ENCODE measurements at regions of chr10 and their contacts with region 1.

Region 1: DNA sequence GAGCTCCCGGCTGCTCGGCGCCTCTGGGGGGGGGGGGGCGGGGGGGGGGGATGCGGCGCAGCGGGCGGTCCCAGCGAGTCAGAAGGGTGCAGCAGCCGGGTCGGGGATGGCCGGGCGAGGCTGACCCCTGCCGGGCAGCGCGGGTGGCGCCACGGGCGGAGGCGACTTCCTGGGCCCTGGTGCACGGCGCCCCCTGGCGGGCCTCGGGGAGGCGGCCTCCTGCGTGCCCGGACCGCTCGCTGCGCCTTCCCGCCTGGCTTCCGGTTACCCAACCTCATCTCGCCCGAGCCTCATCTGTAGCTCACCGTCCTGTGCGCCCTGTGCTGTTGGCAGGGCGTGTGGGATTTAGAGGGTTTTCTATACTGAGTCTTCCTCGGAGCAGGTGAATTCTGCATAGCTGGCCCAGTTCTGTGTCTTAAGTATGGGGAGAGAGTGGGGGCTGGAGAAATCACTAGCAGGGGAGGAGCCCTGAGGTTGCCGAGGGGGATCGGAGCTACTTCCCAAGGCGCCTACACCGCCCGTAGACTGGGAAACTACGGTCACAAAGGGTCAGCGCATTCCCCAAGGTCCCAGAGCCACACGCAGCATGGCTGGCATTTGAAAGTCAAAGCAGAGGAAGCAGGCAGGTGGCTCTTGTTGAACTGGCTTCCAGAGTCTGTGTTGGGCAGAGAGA is 28.3 kb upstream of the WDFY4 start:
- DNase-seq: peak; percentile 93
- H3K4me3 Mint-ChIP-seq: peak overlapping the region; percentile 64
- H3K27ac Mint-ChIP-seq: no peak overlapping the region
- H3K4me1 Mint-ChIP-seq: peaks cover 5% of the 10 kb centered on the region
- H3K27me3 Mint-ChIP-seq: peaks cover 16% of the 10 kb centered on the region

Region 2: GRCh38 chr10:48369555-48369954 is 286.8 kb before region 1 on chr10:
- CTCF ChIA-PET with region 1: interaction called, 95 read pairs
- POLR2A ChIA-PET with region 1: no interaction called
- intact Hi-C with region 1: no loop called
- DNase-seq: no peak
- H3K4me3 Mint-ChIP-seq: no peak overlapping the region
- H3K27ac Mint-ChIP-seq: no peak overlapping the region
- H3K4me1 Mint-ChIP-seq: peaks cover 5% of the 10 kb centered on the region
- H3K27me3 Mint-ChIP-seq: no peaks in the 10 kb centered on the region

Region 3: GRCh38 chr10:48608279-48608681 is 48.1 kb before region 1 on chr10:
- CTCF ChIA-PET with region 1: interaction called, 126 read pairs
- POLR2A ChIA-PET with region 1: no interaction called
- intact Hi-C with region 1: loop called (anchors 1 kb)
- DNase-seq: peak; percentile 43
- H3K4me3 Mint-ChIP-seq: no peak overlapping the region
- H3K27ac Mint-ChIP-seq: no peak overlapping the region
- H3K4me1 Mint-ChIP-seq: peaks cover 3% of the 10 kb centered on the region
- H3K27me3 Mint-ChIP-seq: peaks cover 50% of the 10 kb centered on the region

Region 4: GRCh38 chr10:48634198-48634983 is 22.0 kb before region 1 on chr10:
- CTCF ChIA-PET with region 1: interaction called, 26 read pairs
- POLR2A ChIA-PET with region 1: no interaction called
- intact Hi-C with region 1: no loop called
- DNase-seq: peak; percentile 59
- H3K4me3 Mint-ChIP-seq: no peak overlapping the region
- H3K27ac Mint-ChIP-seq: no peak overlapping the region
- H3K4me1 Mint-ChIP-seq: peaks cover 23% of the 10 kb centered on the region
- H3K27me3 Mint-ChIP-seq: peaks cover 29% of the 10 kb centered on the region

Region 5: GRCh38 chr10:48742891-48743860 is 86.8 kb after region 1 on chr10:
- CTCF ChIA-PET with region 1: no interaction called
- POLR2A ChIA-PET with region 1: no interaction called
- intact Hi-C with region 1: no loop called
- DNase-seq: no peak
- H3K4me3 Mint-ChIP-seq: no peak overlapping the region
- H3K27ac Mint-ChIP-seq: no peak overlapping the region
- H3K4me1 Mint-ChIP-seq: no peaks in the 10 kb centered on the region
- H3K27me3 Mint-ChIP-seq: peaks cover 1% of the 10 kb centered on the region

Region 6: GRCh38 chr10:48833674-48834073 is 177.3 kb after region 1 on chr10:
- CTCF ChIA-PET with region 1: no interaction called
- POLR2A ChIA-PET with region 1: no interaction called
- intact Hi-C with region 1: no loop called
- DNase-seq: no peak
- H3K4me3 Mint-ChIP-seq: no peak overlapping the region
- H3K27ac Mint-ChIP-seq: no peak overlapping the region
- H3K4me1 Mint-ChIP-seq: no peaks in the 10 kb centered on the region
- H3K27me3 Mint-ChIP-seq: peaks cover 9% of the 10 kb centered on the region

Region 7: GRCh38 chr10:48981310-48981907 is 325.0 kb after region 1 on chr10:
- CTCF ChIA-PET with region 1: interaction called, 3 read pairs
- POLR2A ChIA-PET with region 1: no interaction called
- intact Hi-C with region 1: loop called (anchors 2 kb)
- DNase-seq: peak; percentile 65
- H3K4me3 Mint-ChIP-seq: no peak overlapping the region
- H3K27ac Mint-ChIP-seq: no peak overlapping the region
- H3K4me1 Mint-ChIP-seq: no peaks in the 10 kb centered on the region
- H3K27me3 Mint-ChIP-seq: no peaks in the 10 kb centered on the region

Region 8: DNA sequence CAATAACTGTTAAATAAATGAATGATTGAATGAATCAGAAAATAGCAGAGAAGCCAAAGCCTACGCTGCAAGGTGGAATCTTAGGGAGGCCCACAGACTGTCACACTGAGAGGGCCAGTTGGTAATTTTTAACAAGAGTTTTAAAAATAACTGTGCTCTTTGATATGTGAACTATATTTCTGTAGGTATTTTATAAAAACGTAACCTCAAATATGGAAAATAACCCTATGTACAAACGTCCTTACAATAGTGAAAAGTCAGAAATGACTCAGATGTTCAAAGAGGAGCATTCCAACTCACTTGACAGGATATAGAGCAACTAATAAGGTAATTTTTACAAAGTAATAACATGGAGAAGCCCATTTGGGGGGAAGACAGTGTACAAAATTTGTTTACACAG is 550.7 kb after region 1 on chr10:
- CTCF ChIA-PET with region 1: no interaction called
- POLR2A ChIA-PET with region 1: no interaction called
- intact Hi-C with region 1: no loop called
- DNase-seq: no peak
- H3K4me3 Mint-ChIP-seq: no peak overlapping the region
- H3K27ac Mint-ChIP-seq: no peak overlapping the region
- H3K4me1 Mint-ChIP-seq: peaks cover 3% of the 10 kb centered on the region
- H3K27me3 Mint-ChIP-seq: peaks cover 8% of the 10 kb centered on the region

Region 9: GRCh38 chr10:49512121-49512809 is 855.9 kb after region 1 on chr10:
- CTCF ChIA-PET with region 1: interaction called, 45 read pairs
- POLR2A ChIA-PET with region 1: no interaction called
- intact Hi-C with region 1: no loop called
- DNase-seq: no peak
- H3K4me3 Mint-ChIP-seq: no peak overlapping the region
- H3K27ac Mint-ChIP-seq: no peak overlapping the region
- H3K4me1 Mint-ChIP-seq: peaks cover 21% of the 10 kb centered on the region
- H3K27me3 Mint-ChIP-seq: peaks cover 2% of the 10 kb centered on the region